ENCODE measurements at regions of chr6 and their contacts with region 1.

Region 1: DNA sequence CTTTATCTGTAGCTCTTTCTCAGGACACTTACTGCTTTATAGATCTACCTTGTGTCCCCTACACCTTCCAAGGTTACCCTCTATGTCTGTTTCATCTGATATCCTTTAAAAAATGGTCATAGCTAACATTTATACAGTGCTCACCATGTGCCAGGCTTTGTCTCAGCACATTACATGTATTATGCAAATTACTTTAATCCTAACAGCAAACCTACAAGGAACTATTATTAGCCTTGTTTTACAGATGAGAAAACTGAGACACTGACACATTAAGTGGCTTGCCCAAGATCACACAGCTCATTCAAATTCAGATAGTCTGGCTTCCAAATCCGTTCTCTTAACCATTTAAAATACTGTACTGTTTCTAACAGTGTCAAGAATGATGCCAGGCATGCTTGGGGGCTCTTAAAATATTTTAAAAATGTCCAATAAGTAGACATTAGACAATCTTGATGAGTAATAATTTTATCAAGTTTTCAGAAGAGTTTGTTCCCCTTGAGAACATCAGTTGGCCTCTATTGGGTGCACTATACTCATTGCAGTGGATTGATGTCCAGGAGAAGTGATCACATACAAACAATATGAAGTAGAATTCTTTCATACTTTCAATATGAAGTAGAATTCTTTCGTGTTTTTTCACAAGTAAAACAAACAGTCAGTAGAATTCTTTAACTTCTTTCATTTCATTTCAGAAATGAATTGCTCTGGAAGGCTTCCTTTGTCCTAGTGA is 69.6 kb downstream of the DNAH8 start:
- DNase-seq: no peak
- H3K4me3 Mint-ChIP-seq: no peak overlapping the region
- H3K27ac Mint-ChIP-seq: no peak overlapping the region
- H3K4me1 Mint-ChIP-seq: no peaks in the 10 kb centered on the region
- H3K27me3 Mint-ChIP-seq: peaks cover 7% of the 10 kb centered on the region

Region 2: GRCh38 chr6:38773338-38773737 is 11.3 kb before region 1 on chr6:
- CTCF ChIA-PET with region 1: interaction called, 11 read pairs
- DNase-seq: peak; percentile 41
- H3K4me3 Mint-ChIP-seq: no peak overlapping the region
- H3K27ac Mint-ChIP-seq: no peak overlapping the region
- H3K4me1 Mint-ChIP-seq: no peaks in the 10 kb centered on the region
- H3K27me3 Mint-ChIP-seq: peaks cover 9% of the 10 kb centered on the region

Measured in activated naive CD4-positive, alpha-beta T cell treated with anti-CD3 and anti-CD28 coated beads, Interleukin-2, amount 10 ng/mL, durations not matched to agents 7 days and 5 days (primary cell).